Activated CD4-positive, alpha-beta T cell treated with anti-CD3 and anti-CD28 coated beads, Interleukin-2, amount 10 ng/mL, durations not matched to agents 7 days and 5 days (primary cell): ENCODE measurements at regions of chr10 and their contacts with region 1.

Region 1: DNA sequence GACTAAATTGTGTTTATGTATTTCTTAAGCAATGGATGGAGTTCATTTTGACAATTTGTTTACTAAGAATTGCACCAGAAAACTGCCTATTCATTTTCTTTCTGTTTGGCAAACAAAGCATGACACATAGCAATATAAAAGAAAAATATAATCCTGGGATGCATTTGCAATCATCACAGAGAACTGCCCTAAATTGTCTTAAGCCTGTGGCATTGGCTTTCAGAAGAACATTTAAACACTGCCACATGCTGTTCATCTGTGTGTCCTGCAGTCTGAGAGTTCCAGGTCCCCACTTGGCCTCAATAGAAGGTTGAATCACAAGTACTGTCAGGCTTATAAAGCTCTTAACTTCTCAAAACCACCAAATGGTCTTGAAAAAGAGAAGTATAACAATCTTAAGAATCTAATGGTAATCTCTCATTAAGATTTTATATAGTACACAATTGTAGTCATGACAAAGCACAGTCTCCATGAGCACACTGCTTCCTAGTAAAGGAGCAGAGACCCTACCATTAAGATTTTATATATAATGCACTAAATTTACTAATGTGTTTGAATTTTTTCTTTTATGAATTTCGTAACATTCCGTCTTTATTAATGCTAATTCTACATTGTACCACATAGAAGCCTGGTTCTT is 29.9 kb downstream of the RNLS start:
- DNase-seq: peak; percentile 56
- H3K4me3 Mint-ChIP-seq: no peak overlapping the region
- H3K27ac Mint-ChIP-seq: no peak overlapping the region
- H3K4me1 Mint-ChIP-seq: peaks cover 3% of the 10 kb centered on the region
- H3K27me3 Mint-ChIP-seq: peaks cover 3% of the 10 kb centered on the region

Region 2: DNA sequence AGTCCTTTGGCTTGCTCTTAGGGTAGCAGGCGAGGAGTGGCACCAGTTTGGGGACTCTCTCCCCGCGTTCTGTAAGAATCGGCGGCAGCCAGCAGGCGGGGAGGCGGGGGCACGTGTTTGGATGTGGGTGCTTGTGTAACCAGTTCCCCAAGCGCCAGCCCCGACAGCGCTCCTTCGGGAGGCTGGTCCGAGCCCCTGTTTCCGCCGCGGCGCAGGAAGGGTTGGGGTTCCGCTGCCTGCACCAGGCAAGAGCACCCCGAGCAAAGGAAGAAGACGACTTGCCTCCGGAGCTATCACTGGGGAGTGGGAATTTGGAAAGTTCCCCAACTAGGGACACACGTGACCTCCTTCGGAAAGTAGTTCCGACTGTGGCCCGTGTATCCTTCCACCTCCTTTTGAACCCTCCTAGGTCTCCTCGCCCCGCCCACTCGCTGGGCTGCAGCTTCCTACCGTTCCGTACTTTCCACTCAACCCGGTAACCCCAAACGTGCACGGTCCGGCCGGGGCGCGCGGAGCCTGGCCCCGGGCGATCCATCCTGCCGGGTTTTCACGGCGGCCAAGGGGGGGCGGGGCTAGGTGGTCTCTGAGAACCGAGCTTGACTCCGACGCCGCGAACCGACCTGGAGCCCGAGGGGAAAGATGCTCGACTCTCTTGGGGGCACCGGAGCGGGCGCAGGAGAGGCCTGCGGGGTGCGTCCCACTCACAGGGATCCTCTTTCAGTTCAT is 691.1 kb before region 1 on chr10:
- CTCF ChIA-PET with region 1: interaction called, 14 read pairs
- POLR2A ChIA-PET with region 1: no interaction called
- DNase-seq: peak; percentile 95
- H3K4me3 Mint-ChIP-seq: peak overlapping the region; percentile 95
- H3K27ac Mint-ChIP-seq: peak overlapping the region; percentile 97
- H3K4me1 Mint-ChIP-seq: peaks cover 31% of the 10 kb centered on the region
- H3K27me3 Mint-ChIP-seq: no peaks in the 10 kb centered on the region

Region 3: DNA sequence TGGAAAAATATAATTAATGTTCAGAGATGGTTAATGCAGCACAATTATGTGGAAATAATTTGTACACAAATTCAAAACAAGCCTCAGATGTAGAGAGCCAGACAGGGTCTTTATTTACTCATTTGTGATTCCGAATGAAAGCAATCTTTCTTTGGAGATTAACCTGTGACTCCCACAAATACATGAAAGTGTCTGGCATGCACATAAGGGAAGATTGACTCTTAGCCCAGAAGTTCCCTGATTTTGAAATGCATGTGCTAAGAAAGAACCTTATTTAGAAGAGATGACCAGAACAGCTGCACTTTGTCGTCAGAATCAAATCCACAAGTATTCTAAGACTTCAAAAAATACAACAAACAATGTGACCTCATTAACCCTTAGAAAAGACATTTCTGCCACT is 15.2 kb before region 1 on chr10:
- CTCF ChIA-PET with region 1: no interaction called
- POLR2A ChIA-PET with region 1: no interaction called
- DNase-seq: no peak
- H3K4me3 Mint-ChIP-seq: no peak overlapping the region
- H3K27ac Mint-ChIP-seq: no peak overlapping the region
- H3K4me1 Mint-ChIP-seq: no peaks in the 10 kb centered on the region
- H3K27me3 Mint-ChIP-seq: peaks cover 19% of the 10 kb centered on the region